IMR-90 (cell line): ENCODE measurements at regions of chr15 and their contacts with region 1.

Region 1: GRCh38 chr15:81400640-81401236 is 26.7 kb upstream of the TMC3 start:
- DNase-seq: peak; percentile 65
- ATAC-seq: peak; percentile 64; the same call in 1 of the 2 replicates
- H3K4me3 ChIP-seq: no peak overlapping the region
- H3K27ac ChIP-seq: no peak overlapping the region
- H3K4me1 ChIP-seq: no peaks in the 10 kb centered on the region
- H3K27me3 ChIP-seq: no peaks in the 10 kb centered on the region; the same call in 1 of the 2 replicates
- CTCF ChIP-seq: peak; percentile 88
- POLR2A ChIP-seq: no peak
- RAD21 ChIP-seq: peak; percentile 92

Region 2: GRCh38 chr15:81106560-81106959 is 294.2 kb before region 1 on chr15:
- CTCF ChIA-PET with region 1: no interaction called
- POLR2A ChIA-PET with region 1: no interaction called
- dilution Hi-C with region 1: no loop called
- in situ Hi-C with region 1: loop called (anchors 5 kb)
- intact Hi-C with region 1: loop called (anchors 1 kb)
- DNase-seq: peak; percentile 87
- ATAC-seq: peak; percentile 96
- H3K4me3 ChIP-seq: no peak overlapping the region
- H3K27ac ChIP-seq: no peak overlapping the region
- H3K4me1 ChIP-seq: 0 out of 2 replicates have a peak, but pooled peaks cover 3% of the 10 kb centered on the region
- H3K27me3 ChIP-seq: no peaks in the 10 kb centered on the region
- CTCF ChIP-seq: peak; percentile 90
- POLR2A ChIP-seq: no peak
- RAD21 ChIP-seq: peak; percentile 88

Region 3: GRCh38 chr15:81155375-81156218 is 245.1 kb before region 1 on chr15:
- CTCF ChIA-PET with region 1: no interaction called
- POLR2A ChIA-PET with region 1: no interaction called
- dilution Hi-C with region 1: no loop called
- in situ Hi-C with region 1: loop called (anchors 10 kb)
- intact Hi-C with region 1: no loop called
- DNase-seq: peak; percentile 77
- ATAC-seq: peak; percentile 64
- H3K4me3 ChIP-seq: no peak overlapping the region
- H3K27ac ChIP-seq: peak overlapping the region; percentile 21; the same call in 1 of the 2 replicates
- H3K4me1 ChIP-seq: peaks cover 19% of the 10 kb centered on the region
- H3K27me3 ChIP-seq: no peaks in the 10 kb centered on the region
- CTCF ChIP-seq: peak; percentile 80
- POLR2A ChIP-seq: no peak
- RAD21 ChIP-seq: peak; percentile 86

Region 4: GRCh38 chr15:81274931-81275707 is 125.6 kb before region 1 on chr15:
- CTCF ChIA-PET with region 1: interaction called, 23 read pairs
- POLR2A ChIA-PET with region 1: no interaction called
- dilution Hi-C with region 1: no loop called
- in situ Hi-C with region 1: loop called (anchors 5 kb)
- intact Hi-C with region 1: loop called (anchors 1 kb)
- DNase-seq: peak; percentile 86
- ATAC-seq: peak; percentile 91
- H3K4me3 ChIP-seq: no peak overlapping the region
- H3K27ac ChIP-seq: no peak overlapping the region; the same call in 1 of the 2 replicates
- H3K4me1 ChIP-seq: peaks cover 9% of the 10 kb centered on the region
- H3K27me3 ChIP-seq: no peaks in the 10 kb centered on the region
- CTCF ChIP-seq: peak; percentile 92
- POLR2A ChIP-seq: no peak
- RAD21 ChIP-seq: peak; percentile 98

Region 5: GRCh38 chr15:81284256-81285031 is 116.3 kb before region 1 on chr15:
- CTCF ChIA-PET with region 1: interaction called, 3 read pairs
- POLR2A ChIA-PET with region 1: no interaction called
- dilution Hi-C with region 1: no loop called
- in situ Hi-C with region 1: loop called (anchors 5 kb)
- intact Hi-C with region 1: no loop called
- DNase-seq: no peak
- ATAC-seq: no peak
- H3K4me3 ChIP-seq: no peak overlapping the region
- H3K27ac ChIP-seq: no peak overlapping the region
- H3K4me1 ChIP-seq: no peaks in the 10 kb centered on the region; the same call in 1 of the 2 replicates
- H3K27me3 ChIP-seq: no peaks in the 10 kb centered on the region
- CTCF ChIP-seq: no peak
- POLR2A ChIP-seq: no peak
- RAD21 ChIP-seq: no peak

Region 6: GRCh38 chr15:81346611-81347010 is 54.1 kb before region 1 on chr15:
- CTCF ChIA-PET with region 1: no interaction called
- POLR2A ChIA-PET with region 1: no interaction called
- dilution Hi-C with region 1: no loop called
- in situ Hi-C with region 1: loop called (anchors 10 kb)
- intact Hi-C with region 1: no loop called
- DNase-seq: no peak
- ATAC-seq: peak; percentile 21; the same call in 1 of the 2 replicates
- H3K4me3 ChIP-seq: no peak overlapping the region
- H3K27ac ChIP-seq: no peak overlapping the region
- H3K4me1 ChIP-seq: no peaks in the 10 kb centered on the region
- H3K27me3 ChIP-seq: no peaks in the 10 kb centered on the region; the same call in none of the 2 replicates
- CTCF ChIP-seq: no peak
- POLR2A ChIP-seq: no peak
- RAD21 ChIP-seq: no peak

Region 7: DNA sequence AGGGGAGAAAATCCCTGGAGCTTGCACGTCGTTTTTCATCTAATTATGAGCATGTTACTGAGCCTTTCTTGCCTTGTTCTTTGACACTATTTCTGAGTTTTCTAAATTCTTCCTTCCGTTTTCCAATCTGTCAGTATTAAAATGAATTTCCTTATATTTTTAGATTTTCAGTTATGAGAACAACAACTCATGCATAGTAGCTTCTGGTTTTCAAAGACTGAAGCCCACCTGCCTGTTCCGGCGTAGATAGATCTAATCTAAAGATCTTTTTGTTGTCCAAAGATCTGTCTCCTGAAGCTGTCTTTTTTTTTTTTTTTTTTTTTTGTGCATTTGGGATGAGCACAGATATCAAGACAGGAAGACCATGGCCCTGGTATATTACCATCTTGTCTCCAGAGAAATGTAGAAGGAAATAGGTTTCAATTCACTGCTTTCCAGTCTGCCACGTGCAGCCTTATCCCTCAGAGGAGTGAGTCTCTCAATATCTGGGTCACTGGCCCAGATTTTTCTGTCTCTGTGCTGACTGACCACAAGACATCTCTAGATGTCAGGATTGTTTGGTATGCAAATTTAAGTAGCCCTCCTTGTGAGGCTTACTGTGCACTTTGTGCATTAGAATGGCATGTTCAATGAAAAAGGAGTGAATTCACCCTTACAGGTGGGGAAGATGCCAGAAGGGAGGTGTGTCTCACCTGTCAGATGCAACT is 195.6 kb after region 1 on chr15:
- CTCF ChIA-PET with region 1: no interaction called
- POLR2A ChIA-PET with region 1: no interaction called
- dilution Hi-C with region 1: no loop called
- in situ Hi-C with region 1: no loop called
- intact Hi-C with region 1: no loop called
- DNase-seq: no peak
- ATAC-seq: no peak
- H3K4me3 ChIP-seq: no peak overlapping the region
- H3K27ac ChIP-seq: no peak overlapping the region
- H3K4me1 ChIP-seq: no peaks in the 10 kb centered on the region
- H3K27me3 ChIP-seq: no peaks in the 10 kb centered on the region
- CTCF ChIP-seq: no peak
- POLR2A ChIP-seq: no peak
- RAD21 ChIP-seq: no peak